Activated CD4-positive, alpha-beta T cell treated with anti-CD3 and anti-CD28 coated beads for 36 hours (primary cell): ENCODE measurements at regions of chr19 and their contacts with region 1.

Region 1: DNA sequence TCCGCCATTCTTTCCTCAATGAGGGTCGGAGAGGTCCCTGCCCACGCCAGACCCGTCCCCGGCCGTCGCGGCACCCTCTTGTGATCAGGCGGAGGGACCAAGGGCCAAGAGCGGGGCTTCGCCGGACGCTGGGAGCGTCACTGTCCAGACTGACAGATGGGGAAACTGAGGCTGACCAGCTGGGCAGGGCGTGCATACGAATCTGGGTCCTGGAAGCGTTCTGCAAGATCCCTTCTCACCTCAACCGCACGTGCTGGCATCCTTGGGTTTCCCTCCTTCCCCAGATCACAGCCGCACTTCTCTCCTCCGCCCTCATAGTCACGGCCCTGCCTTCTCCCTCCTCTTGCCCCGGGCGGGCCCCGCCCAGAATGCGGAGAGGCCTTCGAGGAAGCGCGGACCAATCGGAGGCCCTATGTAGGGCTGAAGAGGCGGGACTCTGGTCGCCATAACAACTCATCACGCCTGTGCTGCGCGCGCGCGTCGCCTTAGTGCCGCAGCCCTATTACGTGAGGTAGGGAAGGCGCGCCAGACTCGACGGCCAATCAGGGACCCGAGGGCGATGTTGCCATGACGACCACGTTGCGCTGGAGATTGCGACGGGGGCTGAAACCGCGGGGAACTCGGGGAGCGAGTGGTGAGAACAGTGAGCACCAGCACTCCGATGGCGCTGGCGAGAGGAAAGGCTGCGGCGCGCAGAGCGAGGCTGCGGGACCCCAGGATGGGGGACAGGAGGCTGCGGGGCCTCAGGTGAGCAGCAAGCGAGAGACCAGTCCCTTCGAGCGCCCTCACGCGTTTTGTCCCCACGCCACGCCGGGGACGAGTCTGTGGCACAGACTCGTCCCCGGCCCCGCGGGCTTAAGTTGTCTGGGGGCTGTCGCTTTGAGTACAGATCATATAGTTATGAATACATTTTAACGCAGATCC is 5.7 kb downstream of the RNF225 start:
- DNase-seq: peak; percentile 100
- ATAC-seq: peak; percentile 97
- H3K4me3 Mint-ChIP-seq: peak overlapping the region; percentile 82
- H3K27ac Mint-ChIP-seq: peak overlapping the region; percentile 61
- H3K4me1 Mint-ChIP-seq: peaks cover 14% of the 10 kb centered on the region
- H3K27me3 Mint-ChIP-seq: peaks cover 2% of the 10 kb centered on the region

Region 2: DNA sequence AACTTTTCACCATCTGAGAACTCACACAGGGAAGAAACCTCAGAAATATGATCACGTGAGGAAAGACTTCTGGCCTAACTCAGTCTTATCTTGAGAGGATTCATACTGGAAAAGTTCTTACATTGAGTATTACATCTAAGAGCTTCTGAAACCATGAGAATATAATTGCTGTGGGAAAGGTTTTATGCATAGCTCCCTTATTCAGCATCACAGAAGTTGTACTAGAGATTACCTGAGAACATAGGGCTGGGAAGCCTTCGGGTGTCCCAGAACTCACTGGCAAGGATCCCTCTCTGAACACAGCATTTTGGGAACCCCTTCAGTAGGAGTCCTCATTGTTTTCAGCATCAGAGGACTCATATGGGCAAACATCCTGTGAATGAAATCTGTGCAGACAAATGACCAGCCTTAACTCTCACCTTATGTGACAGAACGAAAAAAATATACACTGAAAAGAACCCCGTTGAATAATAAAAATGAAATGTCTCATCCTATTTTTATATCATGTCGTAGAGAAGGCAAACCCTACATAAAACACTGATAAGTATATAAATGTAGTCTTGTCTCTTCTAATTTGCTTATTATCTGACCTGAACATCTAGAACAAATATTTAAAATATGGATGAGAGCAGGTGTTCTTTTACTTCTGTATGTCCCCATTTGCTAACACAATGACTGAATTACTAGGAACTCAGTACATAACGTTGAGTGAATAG is 204.1 kb before region 1 on chr19:
- CTCF ChIA-PET with region 1: no interaction called
- POLR2A ChIA-PET with region 1: no interaction called
- intact Hi-C with region 1: no loop called
- DNase-seq: no peak
- ATAC-seq: no peak
- H3K4me3 Mint-ChIP-seq: no peak overlapping the region
- H3K27ac Mint-ChIP-seq: no peak overlapping the region
- H3K4me1 Mint-ChIP-seq: no peaks in the 10 kb centered on the region
- H3K27me3 Mint-ChIP-seq: no peaks in the 10 kb centered on the region

Region 3: GRCh38 chr19:58362272-58362994 is 38.7 kb before region 1 on chr19 and contains the start of gene ZNF497:
- CTCF ChIA-PET with region 1: interaction called, 4 read pairs
- POLR2A ChIA-PET with region 1: no interaction called
- intact Hi-C with region 1: loop called (anchors 1 kb)
- DNase-seq: peak; percentile 99
- ATAC-seq: peak; percentile 94
- H3K4me3 Mint-ChIP-seq: peak within 1 kb of the TSS; percentile 86
- H3K27ac Mint-ChIP-seq: peak within 1 kb of the TSS; percentile 93
- H3K4me1 Mint-ChIP-seq: peaks cover 7% of the 10 kb centered on the region
- H3K27me3 Mint-ChIP-seq: no peaks in the 10 kb centered on the region
- total RNA-seq, gene ZNF497: 1.1 to 1.5 TPM

Region 4: GRCh38 chr19:58451358-58452101 is 50.4 kb after region 1 on chr19 and contains the start of gene ZNF324B:
- CTCF ChIA-PET with region 1: no interaction called
- POLR2A ChIA-PET with region 1: interaction called, 3 read pairs
- intact Hi-C with region 1: loop called in 1 of 2 experiments (anchors 1 kb)
- DNase-seq: peak; percentile 98
- ATAC-seq: peak; percentile 99
- H3K4me3 Mint-ChIP-seq: peak within 1 kb of the TSS; percentile 77
- H3K27ac Mint-ChIP-seq: peak within 1 kb of the TSS; percentile 55
- H3K4me1 Mint-ChIP-seq: peaks cover 25% of the 10 kb centered on the region
- H3K27me3 Mint-ChIP-seq: peaks cover 15% of the 10 kb centered on the region
- total RNA-seq, gene ZNF324B: 5.8 to 7.5 TPM

Region 5: DNA sequence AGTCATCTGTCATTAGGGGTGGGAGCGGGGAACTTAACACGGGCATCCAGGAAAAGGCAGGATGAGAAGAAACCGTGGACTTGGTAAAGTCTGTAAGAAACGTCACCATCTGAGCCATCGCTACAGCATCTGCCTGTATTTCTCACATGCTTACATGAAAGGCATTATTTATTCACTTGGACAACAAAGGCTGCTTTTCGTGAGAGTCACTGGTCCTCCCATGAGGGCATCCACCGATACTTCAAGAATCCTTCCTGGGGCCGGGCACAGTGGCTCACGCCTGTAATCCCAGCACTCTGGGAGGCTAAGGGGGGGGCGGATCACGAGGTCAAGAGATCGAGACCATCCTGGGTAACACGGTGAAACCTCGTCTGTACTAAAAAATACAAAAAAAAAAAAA is 91.1 kb after region 1 on chr19:
- CTCF ChIA-PET with region 1: no interaction called
- POLR2A ChIA-PET with region 1: no interaction called
- intact Hi-C with region 1: loop called in 1 of 2 experiments (anchors 1 kb)
- DNase-seq: no peak
- ATAC-seq: no peak
- H3K4me3 Mint-ChIP-seq: no peak overlapping the region
- H3K27ac Mint-ChIP-seq: no peak overlapping the region
- H3K4me1 Mint-ChIP-seq: peaks cover 7% of the 10 kb centered on the region
- H3K27me3 Mint-ChIP-seq: no peaks in the 10 kb centered on the region

Region 6: GRCh38 chr19:58581227-58582151 is 180.3 kb after region 1 on chr19:
- CTCF ChIA-PET with region 1: no interaction called
- POLR2A ChIA-PET with region 1: no interaction called
- intact Hi-C with region 1: no loop called
- DNase-seq: peak; percentile 97
- ATAC-seq: peak; percentile 95
- H3K4me3 Mint-ChIP-seq: no peak overlapping the region
- H3K27ac Mint-ChIP-seq: peak overlapping the region; percentile 84
- H3K4me1 Mint-ChIP-seq: peaks cover 33% of the 10 kb centered on the region
- H3K27me3 Mint-ChIP-seq: no peaks in the 10 kb centered on the region